ENCODE measurements at regions of chr17 and their contacts with region 1.

Region 1: DNA sequence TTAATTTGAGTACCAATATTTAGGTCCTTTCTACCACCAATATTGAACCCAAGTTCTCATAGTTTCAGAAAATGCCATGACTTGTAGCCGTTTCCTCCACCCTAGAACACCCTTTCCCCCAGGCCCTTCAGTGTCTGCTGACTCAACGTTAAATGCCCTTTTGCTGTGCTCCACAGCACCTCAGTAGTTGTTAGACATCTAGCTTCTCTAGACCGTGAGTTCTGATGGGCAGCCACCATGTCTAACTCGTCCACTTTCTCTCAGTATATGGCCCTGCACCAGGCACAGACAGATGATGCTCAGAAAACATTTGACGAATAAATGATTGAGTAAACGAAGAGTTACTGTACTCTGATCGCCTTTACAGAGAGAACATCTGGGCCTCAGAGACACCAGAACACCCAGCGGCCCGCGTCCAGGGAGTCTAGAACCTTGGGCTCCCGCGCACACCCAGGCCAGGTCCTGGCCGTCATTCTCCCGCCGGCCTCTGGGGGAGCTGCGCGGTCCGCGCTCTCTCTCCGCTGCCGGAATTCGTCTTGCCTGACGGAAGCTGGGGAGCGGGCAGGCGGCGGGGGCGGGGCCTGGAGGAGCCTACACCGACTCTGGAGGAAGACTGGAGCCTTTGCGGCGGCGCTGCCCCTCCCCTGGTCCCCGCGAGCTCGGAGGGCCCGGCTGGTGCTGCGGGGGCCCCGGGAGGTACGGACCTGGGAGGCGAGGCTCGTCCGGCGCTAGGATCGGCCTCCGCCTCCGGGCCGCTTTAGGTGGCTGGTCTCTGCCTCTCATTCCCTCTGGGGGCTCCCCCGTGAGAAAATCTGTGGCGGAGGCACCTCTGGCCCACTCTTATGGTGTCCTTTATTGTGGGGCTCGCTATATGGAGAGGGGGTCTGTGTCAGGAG is at the start of gene NKIRAS2:
- DNase-seq: peak; percentile 93 to 94 (median 93)
- H3K4me3 ChIP-seq: peak within 1 kb of the TSS; percentile 74 to 93 (median 92)
- H3K27ac ChIP-seq: peak within 1 kb of the TSS; percentile 76 to 93
- H3K4me1 ChIP-seq: peaks cover 25 to 52% (median 42%) of the 10 kb centered on the region in 4 experiments
- H3K27me3 ChIP-seq: no peaks in the 10 kb centered on the region

Region 2: DNA sequence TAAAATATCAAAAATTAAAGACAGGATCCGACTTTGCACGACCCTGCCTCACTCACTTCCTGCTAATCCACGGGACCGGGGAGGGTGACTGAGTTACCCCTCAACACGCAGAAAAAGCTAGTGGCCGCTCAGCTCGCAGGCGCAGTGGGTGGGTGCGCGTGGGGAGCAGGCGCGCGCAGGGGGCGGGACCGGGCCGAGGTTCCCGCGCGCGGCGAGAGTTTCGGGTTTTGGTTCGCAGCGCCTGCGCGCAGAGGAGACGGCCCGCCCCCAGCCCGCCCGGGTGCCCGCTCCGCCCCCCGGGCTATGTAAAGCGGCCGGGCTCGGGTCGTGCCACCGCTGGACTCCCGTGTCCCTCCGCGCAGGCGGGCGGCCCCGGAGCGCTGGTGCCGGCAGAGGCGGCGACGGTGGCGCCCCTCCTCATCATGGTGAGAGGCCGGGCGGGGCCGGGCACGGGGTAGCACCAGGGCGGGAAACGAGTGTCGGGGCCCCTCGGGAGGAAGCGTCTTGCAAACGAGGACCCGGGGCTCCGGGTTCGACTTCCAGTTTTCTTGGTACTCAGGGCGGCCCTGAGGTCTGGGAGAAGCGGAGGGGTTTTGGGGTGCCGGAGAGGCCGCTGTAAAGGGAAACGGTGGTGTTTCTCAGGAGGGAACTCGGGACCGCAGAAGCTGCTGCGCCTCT is 53.2 kb before region 1 on chr17 and contains the start of gene CNP:
- CTCF ChIA-PET with region 1: interaction called, 10 read pairs
- POLR2A ChIA-PET with region 1: interaction called, 5 read pairs
- DNase-seq: peak; percentile 92 to 96 (median 94)
- H3K4me3 ChIP-seq: peak within 1 kb of the TSS; percentile 72 to 86 (median 78)
- H3K27ac ChIP-seq: peak within 1 kb of the TSS; percentile 72 to 87
- H3K4me1 ChIP-seq: peaks cover 6 to 33% (median 22%) of the 10 kb centered on the region in 4 experiments
- H3K27me3 ChIP-seq: no peaks in the 10 kb centered on the region

Region 3: DNA sequence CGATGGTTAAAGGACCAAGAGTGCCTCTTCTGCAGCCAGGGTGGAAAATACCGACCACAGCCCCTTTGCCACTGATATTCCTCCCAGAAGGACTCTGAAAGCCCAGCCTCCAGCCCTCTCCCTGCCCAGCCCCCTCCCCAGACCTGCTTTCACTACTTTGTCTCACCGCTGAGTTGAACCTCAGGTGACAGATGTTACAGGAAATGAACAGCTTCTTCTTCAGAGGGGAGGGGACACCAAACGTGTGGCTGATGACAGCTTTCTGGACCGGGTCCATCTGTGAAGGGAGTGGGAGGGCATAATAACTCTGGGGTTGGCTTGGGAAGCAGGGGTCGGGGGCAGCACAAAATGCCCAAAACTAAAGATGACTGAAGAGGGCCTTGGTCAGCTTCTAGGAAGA is 14.3 kb after region 1 on chr17:
- CTCF ChIA-PET with region 1: interaction called, 22 read pairs
- POLR2A ChIA-PET with region 1: no interaction called
- DNase-seq: no peak
- H3K4me3 ChIP-seq: no peak overlapping the region
- H3K27ac ChIP-seq: no peak overlapping the region
- H3K4me1 ChIP-seq: peaks cover 0 to 3% (median 0%) of the 10 kb centered on the region in 4 experiments
- H3K27me3 ChIP-seq: no peaks in the 10 kb centered on the region

Region 4: DNA sequence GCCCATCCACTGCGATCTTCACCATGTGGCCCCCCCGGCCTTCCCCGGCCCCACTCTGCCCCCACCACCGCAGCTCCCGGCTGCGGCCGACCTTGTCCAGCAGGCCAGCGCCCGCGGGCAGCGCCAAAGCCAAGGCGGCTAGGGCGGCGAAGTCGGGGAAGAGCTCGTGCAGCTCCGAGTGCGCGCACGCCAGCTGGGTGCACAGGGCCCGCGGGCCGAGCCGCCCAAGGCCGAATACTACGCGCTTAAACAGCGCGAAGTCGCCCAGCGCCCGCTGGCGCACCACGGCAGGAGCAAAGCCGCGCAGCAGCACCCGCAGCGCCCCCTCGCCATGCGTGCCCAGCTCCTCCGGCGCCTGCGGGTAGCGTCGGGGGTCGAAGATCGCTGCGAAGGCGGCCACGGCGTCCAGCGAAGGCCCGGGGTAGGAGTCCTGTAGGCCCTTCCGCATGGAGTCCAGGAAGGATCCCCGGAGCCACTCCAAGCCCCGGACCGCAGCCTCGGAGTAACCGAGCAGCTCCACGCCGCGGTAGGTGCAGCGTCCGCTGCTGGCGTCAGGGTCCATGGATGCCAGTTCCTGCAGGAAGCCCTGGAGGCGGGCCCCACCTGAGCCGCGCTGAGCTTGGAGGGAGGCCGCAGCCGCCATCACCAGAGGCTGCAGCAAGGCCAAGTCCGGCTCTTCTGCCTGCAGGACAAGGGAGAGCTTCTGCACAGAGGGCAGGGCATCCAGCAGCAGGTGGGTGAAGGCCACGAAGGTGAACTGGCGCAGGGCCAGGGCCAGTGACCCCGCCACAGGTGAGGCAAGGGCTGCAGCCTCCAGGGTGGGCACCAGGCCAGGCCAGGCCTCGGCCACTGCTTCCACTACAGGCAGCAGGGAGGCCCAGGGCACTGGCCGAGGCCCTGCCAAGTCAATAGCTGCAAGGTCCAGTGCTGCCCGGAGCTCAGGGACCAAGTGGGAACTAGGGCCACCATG is 20.3 kb after region 1 on chr17:
- CTCF ChIA-PET with region 1: interaction called, 22 read pairs
- POLR2A ChIA-PET with region 1: no interaction called
- DNase-seq: peak in 2 of 3 donors; percentile 35 to 48
- H3K4me3 ChIP-seq: peak overlapping the region in 3 of 7 experiments; percentile 50 to 60 (median 55)
- H3K27ac ChIP-seq: no peak overlapping the region
- H3K4me1 ChIP-seq: peaks cover 0 to 11% (median 5%) of the 10 kb centered on the region in 4 experiments
- H3K27me3 ChIP-seq: no peaks in the 10 kb centered on the region

Region 5: DNA sequence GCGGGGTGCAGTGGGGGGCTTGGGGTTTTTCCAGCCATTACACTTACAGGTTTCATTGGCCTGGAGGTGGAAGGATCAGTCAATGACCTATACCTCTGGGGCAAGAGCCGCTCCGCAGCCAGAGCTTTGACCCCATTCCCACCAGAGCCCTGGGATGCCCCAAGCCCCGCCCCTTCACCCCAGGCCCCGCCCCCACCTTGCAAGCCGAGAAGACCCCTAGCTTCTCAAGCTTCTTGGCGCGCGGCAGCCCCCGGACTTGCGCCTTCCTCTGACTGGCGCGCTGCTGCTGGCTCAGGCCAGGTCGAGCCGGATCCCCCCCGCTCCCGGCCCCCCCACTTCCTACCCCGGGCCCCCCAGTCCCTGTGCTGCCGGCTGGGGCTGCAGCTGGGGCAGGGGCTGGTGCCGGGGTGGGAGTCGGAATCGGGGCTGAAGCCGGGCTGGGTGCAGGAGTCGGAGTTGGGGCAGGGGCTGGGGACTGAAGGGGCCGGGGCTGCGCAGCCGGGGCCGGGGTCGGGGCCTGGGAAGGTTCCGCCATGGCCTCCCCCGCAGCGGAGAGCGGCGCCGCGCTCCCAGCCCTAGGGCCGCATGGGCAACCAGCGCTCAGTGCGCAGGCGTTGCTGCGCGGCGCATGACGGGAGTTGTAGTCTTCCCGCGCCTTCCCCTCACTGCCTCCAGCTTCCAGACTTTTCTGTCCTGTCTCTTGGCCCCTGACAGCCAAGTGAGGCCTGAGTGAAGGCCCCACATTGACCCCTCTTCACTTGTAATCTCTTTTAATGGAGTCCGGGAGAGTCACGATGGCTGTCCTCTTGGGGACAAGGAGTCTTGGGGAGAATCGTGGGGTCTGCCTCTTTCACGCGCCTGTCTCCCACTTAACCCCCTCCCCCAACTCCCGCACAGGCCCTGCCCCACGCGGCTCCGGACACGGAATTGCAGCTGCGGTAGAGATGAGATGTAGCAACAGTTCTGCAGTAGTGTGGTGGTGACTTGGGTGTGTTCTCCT is 101.3 kb after region 1 on chr17 and contains the start of gene KAT2A:
- CTCF ChIA-PET with region 1: interaction called, 381 read pairs
- POLR2A ChIA-PET with region 1: interaction called, 3 read pairs
- DNase-seq: peak; percentile 56 to 77 (median 69)
- H3K4me3 ChIP-seq: peak within 1 kb of the TSS; percentile 8 to 72 (median 57)
- H3K27ac ChIP-seq: peak within 1 kb of the TSS in 1 of 2 experiments; percentile 54
- H3K4me1 ChIP-seq: peaks cover 0 to 15% (median 13%) of the 10 kb centered on the region in 4 experiments
- H3K27me3 ChIP-seq: no peaks in the 10 kb centered on the region